ENCODE measurements at regions of chr3 and their contacts with region 1.

Region 1: DNA sequence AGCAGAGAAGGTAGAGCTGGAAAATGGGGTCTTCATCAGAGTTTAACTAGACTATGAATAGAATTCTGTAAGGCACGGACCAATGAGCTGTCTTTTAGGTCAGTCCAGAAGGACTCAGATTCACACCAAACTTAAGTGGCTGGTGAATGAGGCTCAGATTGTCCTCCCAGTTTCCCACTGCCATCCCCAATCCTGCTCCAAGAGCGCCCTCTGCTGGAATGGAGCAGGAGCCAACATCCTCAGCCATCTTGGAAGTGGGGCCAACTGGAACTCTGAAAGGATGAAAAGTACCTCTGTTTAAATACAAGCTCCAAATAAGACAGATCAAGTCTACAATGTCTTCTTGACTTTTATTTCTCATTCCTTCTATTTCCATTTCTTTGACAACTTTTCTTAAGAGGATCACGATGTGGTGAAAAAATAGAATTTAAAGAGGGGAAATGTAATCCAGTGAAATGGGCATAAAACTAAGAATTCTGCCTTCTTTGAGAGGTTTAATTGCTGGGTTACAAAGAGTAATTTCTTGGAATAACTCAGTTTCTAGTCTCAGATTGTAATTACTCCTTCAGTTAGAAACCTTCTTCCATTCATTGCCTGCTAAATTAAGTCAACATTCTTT is 217.1 kb upstream of the TPRG1 start:
- DNase-seq: peak; percentile 60
- H3K4me3 Mint-ChIP-seq: no peak overlapping the region
- H3K27ac Mint-ChIP-seq: no peak overlapping the region
- H3K4me1 Mint-ChIP-seq: peaks cover 32% of the 10 kb centered on the region
- H3K27me3 Mint-ChIP-seq: peaks cover 3% of the 10 kb centered on the region

Region 2: GRCh38 chr3:187994221-187995042 is 960.3 kb before region 1 on chr3:
- intact Hi-C with region 1: loop called (anchors 10 kb)
- DNase-seq: no peak
- H3K4me3 Mint-ChIP-seq: peak overlapping the region; percentile 35
- H3K27ac Mint-ChIP-seq: peak overlapping the region; percentile 77
- H3K4me1 Mint-ChIP-seq: peaks cover 70% of the 10 kb centered on the region
- H3K27me3 Mint-ChIP-seq: no peaks in the 10 kb centered on the region

Region 3: GRCh38 chr3:188286087-188286513 is 668.6 kb before region 1 on chr3:
- intact Hi-C with region 1: loop called (anchors 10 kb)
- DNase-seq: no peak
- H3K4me3 Mint-ChIP-seq: no peak overlapping the region
- H3K27ac Mint-ChIP-seq: peak overlapping the region; percentile 5
- H3K4me1 Mint-ChIP-seq: peaks cover 52% of the 10 kb centered on the region
- H3K27me3 Mint-ChIP-seq: no peaks in the 10 kb centered on the region

Region 4: DNA sequence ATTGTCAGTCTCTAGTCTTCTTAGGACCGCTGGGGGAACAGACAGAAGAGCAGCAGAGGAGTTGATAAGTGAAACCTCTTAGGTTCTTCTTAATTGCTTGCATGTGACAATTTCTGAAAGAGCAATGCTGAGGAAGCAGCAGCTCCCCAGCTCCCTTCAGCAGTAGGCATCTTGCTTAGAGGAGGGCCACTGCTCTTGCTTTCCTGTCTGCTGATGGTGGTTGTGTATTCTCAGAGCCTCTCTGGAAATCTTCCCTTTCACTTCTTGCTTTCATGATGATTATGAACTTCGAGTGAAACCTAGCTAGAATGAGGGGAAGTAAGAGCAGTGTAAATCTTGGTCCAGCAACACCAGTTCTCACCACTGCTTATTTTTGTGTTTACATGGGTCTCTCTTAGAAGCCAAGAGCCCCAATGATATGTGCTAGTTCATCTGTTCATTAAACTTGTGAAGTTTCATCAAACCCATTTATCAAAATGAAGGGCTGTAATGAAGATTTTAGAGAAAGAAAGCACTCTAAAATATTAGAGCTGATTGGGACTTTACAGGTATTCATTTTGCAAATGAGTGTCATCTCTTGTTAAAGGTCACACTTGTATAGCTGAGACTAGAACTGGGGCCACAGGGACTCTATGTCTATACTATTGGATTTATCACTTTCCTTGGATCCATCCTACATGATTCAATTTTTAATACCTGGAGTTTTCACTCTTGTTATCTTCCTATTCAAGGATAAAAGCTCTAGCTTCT is 554.0 kb before region 1 on chr3:
- intact Hi-C with region 1: loop called (anchors 5 kb)
- DNase-seq: peak; percentile 22
- H3K4me3 Mint-ChIP-seq: no peak overlapping the region
- H3K27ac Mint-ChIP-seq: peak overlapping the region; percentile 38
- H3K4me1 Mint-ChIP-seq: peaks cover 70% of the 10 kb centered on the region
- H3K27me3 Mint-ChIP-seq: no peaks in the 10 kb centered on the region

Region 5: DNA sequence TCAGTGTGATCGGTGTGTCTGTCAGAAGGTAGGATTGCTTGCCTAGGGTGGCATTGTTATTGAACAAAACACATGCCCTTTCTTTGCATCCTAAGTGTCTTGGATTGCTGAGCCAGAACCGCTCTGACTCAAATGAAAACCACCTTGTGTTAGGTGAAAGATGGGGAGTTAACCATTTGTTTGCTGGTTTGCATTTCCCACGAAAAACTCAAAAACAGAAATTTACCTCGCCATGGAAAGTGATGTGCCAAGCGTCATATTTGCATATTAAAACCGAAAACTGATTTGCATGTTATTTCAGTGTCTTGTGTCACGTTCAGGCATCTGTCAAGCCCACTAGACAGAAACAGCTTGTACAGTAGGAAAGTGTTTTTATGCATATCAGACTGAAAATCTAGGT is 257.6 kb before region 1 on chr3:
- intact Hi-C with region 1: loop called (anchors 10 kb)
- DNase-seq: no peak
- H3K4me3 Mint-ChIP-seq: no peak overlapping the region
- H3K27ac Mint-ChIP-seq: no peak overlapping the region
- H3K4me1 Mint-ChIP-seq: peaks cover 30% of the 10 kb centered on the region
- H3K27me3 Mint-ChIP-seq: peaks cover 2% of the 10 kb centered on the region

Region 6: GRCh38 chr3:188830893-188831292 is 123.8 kb before region 1 on chr3:
- intact Hi-C with region 1: loop called (anchors 1 kb)
- DNase-seq: no peak
- H3K4me3 Mint-ChIP-seq: no peak overlapping the region
- H3K27ac Mint-ChIP-seq: no peak overlapping the region
- H3K4me1 Mint-ChIP-seq: peaks cover 8% of the 10 kb centered on the region
- H3K27me3 Mint-ChIP-seq: no peaks in the 10 kb centered on the region

Region 7: DNA sequence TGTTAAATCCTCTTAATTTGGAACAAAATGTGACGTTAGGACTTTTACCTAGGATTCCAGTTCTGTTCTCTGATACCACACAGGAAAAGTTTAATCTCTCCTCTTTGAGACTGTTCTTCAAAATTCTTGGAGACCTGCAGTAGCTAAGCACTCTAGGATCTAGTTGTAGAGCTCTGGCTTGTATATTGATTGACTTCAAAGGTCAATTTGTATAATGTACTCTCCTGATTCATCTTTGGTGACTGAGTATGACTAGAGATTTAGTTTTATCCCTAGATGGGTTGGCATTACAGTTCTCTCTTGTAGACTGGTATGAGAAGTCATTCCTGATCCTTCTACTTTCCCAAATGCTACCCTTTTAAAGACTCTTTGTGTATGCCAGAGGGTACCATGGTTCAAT is 48.7 kb after region 1 on chr3:
- intact Hi-C with region 1: no loop called
- DNase-seq: no peak
- H3K4me3 Mint-ChIP-seq: no peak overlapping the region
- H3K27ac Mint-ChIP-seq: no peak overlapping the region
- H3K4me1 Mint-ChIP-seq: no peaks in the 10 kb centered on the region
- H3K27me3 Mint-ChIP-seq: peaks cover 13% of the 10 kb centered on the region

Region 8: DNA sequence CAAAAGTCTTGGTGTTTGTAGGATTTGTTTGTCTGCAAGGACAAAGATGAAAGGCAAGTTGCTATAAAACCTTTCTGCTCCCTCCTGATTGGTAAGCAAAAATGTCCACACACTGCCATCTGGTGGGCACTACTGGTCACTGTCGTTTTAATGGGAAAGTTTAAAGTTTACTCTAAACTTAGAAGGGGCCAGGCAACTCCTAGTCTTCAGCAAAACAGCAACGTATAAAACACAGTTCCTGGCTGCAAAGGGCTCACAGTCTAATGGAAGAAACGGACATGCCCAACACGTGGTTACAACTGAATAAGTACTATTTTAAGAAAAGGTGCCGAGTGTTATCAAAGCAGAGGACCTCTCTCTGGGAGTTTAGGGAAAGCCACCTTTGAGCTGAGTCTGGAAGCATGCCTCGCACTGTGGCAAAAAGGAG is 193.4 kb after region 1 on chr3:
- intact Hi-C with region 1: loop called (anchors 2 kb)
- DNase-seq: peak; percentile 52
- H3K4me3 Mint-ChIP-seq: no peak overlapping the region
- H3K27ac Mint-ChIP-seq: no peak overlapping the region
- H3K4me1 Mint-ChIP-seq: peaks cover 41% of the 10 kb centered on the region
- H3K27me3 Mint-ChIP-seq: peaks cover 7% of the 10 kb centered on the region

Measured in activated T-helper 2 cell treated with anti-CD3 and anti-CD28 coated beads, Interferon-gamma antibody, Interleukin-2, Interleukin-4, amounts not matched to agents 10 μg/mL and 5 μg/mL and 100 μg/mL, durations not matched to agents 14 hours and 24 hours and 36 hours (primary cell).